ENCODE measurements at regions of chr11 and their contacts with region 1.

Region 1: DNA sequence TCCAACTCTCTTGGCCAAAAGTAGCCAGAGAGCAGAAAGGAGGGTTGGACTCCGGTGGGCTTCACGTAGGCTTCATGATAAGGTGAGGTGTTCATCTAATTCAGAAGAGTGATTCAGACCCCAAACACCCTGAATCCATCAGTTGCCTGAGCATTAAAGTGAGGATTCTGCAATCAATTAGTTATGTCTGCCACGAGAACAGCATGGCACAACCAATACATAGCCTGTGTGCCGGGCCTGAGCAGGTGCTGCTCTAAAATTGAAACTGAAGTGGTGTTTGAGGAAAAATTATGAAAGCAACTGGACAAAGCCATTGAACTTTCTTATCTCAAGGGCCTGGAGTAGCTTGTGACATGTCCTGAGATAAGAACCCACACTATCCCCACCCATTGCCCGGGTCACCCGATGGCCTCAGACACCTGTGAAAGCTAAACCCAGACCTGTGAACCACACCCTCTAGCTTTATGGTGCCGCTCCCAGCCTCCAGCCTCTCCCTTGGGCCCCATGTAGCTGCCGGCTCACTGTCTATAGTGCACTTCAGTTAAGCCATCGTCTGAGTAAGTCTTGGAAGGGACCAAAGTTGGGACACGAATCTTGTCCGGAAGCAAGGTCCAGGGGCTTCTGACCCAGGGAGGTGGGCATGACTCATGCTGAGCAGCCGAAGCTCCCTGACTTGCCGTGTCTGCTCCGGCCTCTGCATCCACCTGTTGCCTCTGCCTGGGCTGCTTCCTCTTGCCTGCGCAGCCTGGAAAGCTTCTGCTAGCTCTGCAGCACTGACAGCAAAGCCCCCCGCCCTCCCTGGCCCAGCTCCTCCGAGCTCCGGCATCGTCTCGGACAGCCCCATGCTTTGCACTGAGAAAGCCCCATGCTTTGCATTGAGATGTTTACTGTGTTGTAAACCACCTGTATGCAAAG is 5.7 kb upstream of the MYEOV start:
- DNase-seq: no peak
- ATAC-seq: no peak
- H3K4me3 ChIP-seq: no peak overlapping the region
- H3K27ac ChIP-seq: no peak overlapping the region
- H3K4me1 ChIP-seq: no peaks in the 10 kb centered on the region
- H3K27me3 ChIP-seq: no peaks in the 10 kb centered on the region
- CTCF ChIP-seq: no peak
- POLR2A ChIP-seq: no peak
- RAD21 ChIP-seq: no peak

Region 2: GRCh38 chr11:69013009-69013951 is 274.9 kb before region 1 on chr11 and contains the start of gene MRGPRF:
- CTCF ChIA-PET with region 1: no interaction called
- POLR2A ChIA-PET with region 1: no interaction called
- dilution Hi-C with region 1: no loop called
- in situ Hi-C with region 1: no loop called
- intact Hi-C with region 1: no loop called
- DNase-seq: peak; percentile 91
- ATAC-seq: peak; percentile 48
- H3K4me3 ChIP-seq: peak within 1 kb of the TSS; percentile 68
- H3K27ac ChIP-seq: peak within 1 kb of the TSS; percentile 99
- H3K4me1 ChIP-seq: peaks cover 43% of the 10 kb centered on the region
- H3K27me3 ChIP-seq: no peaks in the 10 kb centered on the region
- CTCF ChIP-seq: peak; percentile 78
- POLR2A ChIP-seq: no peak
- RAD21 ChIP-seq: peak; percentile 55
- total RNA-seq, gene MRGPRF: 5.8 and 6.3 TPM in 2 replicates

Region 3: DNA sequence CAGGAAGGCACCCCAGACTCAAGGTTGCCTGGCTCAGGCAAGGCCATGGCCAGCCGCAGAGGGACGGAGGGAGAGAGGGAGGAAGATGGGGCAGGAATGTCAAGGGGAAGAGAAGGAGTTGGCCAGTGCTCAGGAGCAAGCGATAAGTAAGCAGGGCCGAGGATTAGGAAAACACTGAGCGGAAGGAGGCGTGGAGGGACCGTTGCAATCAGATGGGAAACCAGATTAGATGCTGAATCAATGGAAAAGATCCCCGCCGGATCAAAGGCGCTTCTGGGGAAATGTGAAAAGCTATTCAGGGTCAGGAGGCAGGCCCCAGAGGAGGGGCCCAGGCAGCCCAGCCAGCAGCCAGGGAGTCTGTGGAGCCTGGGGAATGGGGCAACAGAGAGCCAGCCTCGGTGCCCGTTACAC is 20.8 kb before region 1 on chr11:
- CTCF ChIA-PET with region 1: interaction called, 3 read pairs
- POLR2A ChIA-PET with region 1: no interaction called
- dilution Hi-C with region 1: no loop called
- in situ Hi-C with region 1: no loop called
- intact Hi-C with region 1: loop called (anchors 1 kb)
- DNase-seq: no peak
- ATAC-seq: no peak
- H3K4me3 ChIP-seq: no peak overlapping the region
- H3K27ac ChIP-seq: no peak overlapping the region
- H3K4me1 ChIP-seq: no peaks in the 10 kb centered on the region
- H3K27me3 ChIP-seq: peaks cover 28% of the 10 kb centered on the region
- CTCF ChIP-seq: no peak
- POLR2A ChIP-seq: no peak
- RAD21 ChIP-seq: no peak

Region 4: DNA sequence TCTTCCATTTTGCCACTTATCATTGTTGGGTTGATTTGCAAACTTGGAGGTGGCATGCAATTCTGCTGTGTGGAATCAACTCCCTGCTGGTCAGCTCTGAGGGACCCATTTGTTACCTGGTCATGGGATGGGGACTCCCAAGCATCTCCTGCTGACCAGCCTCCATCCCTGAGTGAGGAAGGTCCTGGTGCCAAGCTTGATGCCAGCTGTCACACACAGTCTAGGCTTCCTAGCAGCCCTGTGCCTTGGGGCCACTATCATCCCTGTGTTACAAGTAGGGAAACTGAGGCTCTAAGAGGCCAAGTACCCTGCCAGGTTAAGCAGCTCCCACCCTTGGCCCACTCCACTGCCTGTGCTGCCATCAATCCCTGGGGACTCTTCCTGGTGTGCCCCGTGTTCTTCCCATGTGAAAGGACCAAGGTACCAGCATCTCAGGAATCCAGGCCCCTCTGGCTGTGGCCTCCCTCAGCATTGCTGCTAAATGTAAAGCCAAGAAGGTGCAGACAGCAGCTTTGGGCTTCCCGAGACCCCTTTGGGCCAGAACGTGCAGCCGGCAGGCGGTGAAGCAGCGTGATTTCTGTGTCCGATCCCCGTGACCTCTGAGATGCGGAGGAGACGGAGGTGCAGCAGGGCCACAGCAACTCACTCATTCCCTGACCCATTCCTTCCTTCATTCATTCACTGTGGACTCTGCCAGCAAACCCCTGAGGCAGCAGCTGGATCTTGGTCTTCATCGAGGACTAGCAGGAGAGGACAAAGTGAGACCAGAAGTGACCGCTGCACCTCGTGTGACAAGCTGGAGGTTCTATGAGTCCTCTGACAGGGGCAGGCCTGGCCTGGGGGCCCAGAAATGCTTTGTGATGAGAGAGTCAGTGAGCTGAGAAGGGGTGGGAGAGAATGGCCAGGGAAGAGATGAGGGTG is 55.4 kb after region 1 on chr11:
- CTCF ChIA-PET with region 1: no interaction called
- POLR2A ChIA-PET with region 1: no interaction called
- dilution Hi-C with region 1: no loop called
- in situ Hi-C with region 1: no loop called
- intact Hi-C with region 1: no loop called
- DNase-seq: no peak
- ATAC-seq: no peak
- H3K4me3 ChIP-seq: no peak overlapping the region
- H3K27ac ChIP-seq: no peak overlapping the region
- H3K4me1 ChIP-seq: peaks cover 2% of the 10 kb centered on the region; the same call in 1 of the 2 replicates
- H3K27me3 ChIP-seq: no peaks in the 10 kb centered on the region
- CTCF ChIP-seq: no peak
- POLR2A ChIP-seq: no peak
- RAD21 ChIP-seq: no peak

Measured in IMR-90 (cell line).